Naive thymus-derived CD4-positive, alpha-beta T cell (primary cell): ENCODE measurements at regions of chr10 and their contacts with region 1.

Region 1: GRCh38 chr10:11403116-11403515 is 208.3 kb downstream of the USP6NL start:
- DNase-seq: peak; percentile 25 to 90 (median 84)
- ATAC-seq: peak; percentile 95
- H3K4me3 ChIP-seq: peak overlapping the region; percentile 45
- H3K4me3 Mint-ChIP-seq: peak overlapping the region; percentile 74 to 87 (median 80)
- H3K27ac ChIP-seq: peak overlapping the region; percentile 57
- H3K27ac Mint-ChIP-seq: peak overlapping the region; percentile 89 to 98 (median 93)
- H3K4me1 ChIP-seq: peaks cover 45 to 48% of the 10 kb centered on the region in 2 donors
- H3K4me1 Mint-ChIP-seq: peaks cover 46 to 89% (median 81%) of the 10 kb centered on the region in 7 donors
- H3K27me3 ChIP-seq: no peaks in the 10 kb centered on the region
- H3K27me3 Mint-ChIP-seq: no peaks in the 10 kb centered on the region

Region 2: GRCh38 chr10:11335167-11335652 is 67.9 kb before region 1 on chr10:
- CTCF ChIA-PET with region 1: no interaction called
- POLR2A ChIA-PET with region 1: no interaction called
- intact Hi-C with region 1: loop called in 1 of 2 experiments (anchors 2 kb)
- DNase-seq: no peak
- ATAC-seq: peak; percentile 55
- H3K4me3 ChIP-seq: no peak overlapping the region
- H3K4me3 Mint-ChIP-seq: peak overlapping the region in 3 of 10 donors; percentile 1 to 52 (median 44)
- H3K27ac ChIP-seq: no peak overlapping the region
- H3K27ac Mint-ChIP-seq: peak overlapping the region; percentile 1 to 90 (median 77)
- H3K4me1 ChIP-seq: peaks cover 0 to under 1% of the 10 kb centered on the region in 2 donors
- H3K4me1 Mint-ChIP-seq: peaks cover 7 to 64% (median 51%) of the 10 kb centered on the region in 7 donors
- H3K27me3 ChIP-seq: no peaks in the 10 kb centered on the region
- H3K27me3 Mint-ChIP-seq: no peaks in the 10 kb centered on the region

Region 3: GRCh38 chr10:11367505-11367904 is 35.6 kb before region 1 on chr10:
- CTCF ChIA-PET with region 1: no interaction called
- POLR2A ChIA-PET with region 1: interaction called, 3 read pairs
- intact Hi-C with region 1: loop called in 1 of 2 experiments (anchors 5 kb)
- DNase-seq: no peak
- ATAC-seq: no peak
- H3K4me3 ChIP-seq: no peak overlapping the region
- H3K4me3 Mint-ChIP-seq: peak overlapping the region in 6 of 10 donors; percentile 23 to 88 (median 64)
- H3K27ac ChIP-seq: no peak overlapping the region
- H3K27ac Mint-ChIP-seq: peak overlapping the region in 5 of 9 donors; percentile 46 to 97 (median 91)
- H3K4me1 ChIP-seq: peaks cover 0 to 13% of the 10 kb centered on the region in 2 donors
- H3K4me1 Mint-ChIP-seq: peaks cover 9 to 27% (median 19%) of the 10 kb centered on the region in 7 donors
- H3K27me3 ChIP-seq: no peaks in the 10 kb centered on the region
- H3K27me3 Mint-ChIP-seq: no peaks in the 10 kb centered on the region

Region 4: GRCh38 chr10:11424456-11425297 is 21.6 kb after region 1 on chr10:
- CTCF ChIA-PET with region 1: interaction called, 3 read pairs
- POLR2A ChIA-PET with region 1: no interaction called
- intact Hi-C with region 1: loop called in 1 of 2 experiments (anchors 2 kb)
- DNase-seq: no peak
- ATAC-seq: no peak
- H3K4me3 ChIP-seq: no peak overlapping the region
- H3K4me3 Mint-ChIP-seq: no peak overlapping the region
- H3K27ac ChIP-seq: no peak overlapping the region
- H3K27ac Mint-ChIP-seq: peak overlapping the region in 3 of 9 donors; percentile 3 to 77 (median 16)
- H3K4me1 ChIP-seq: peaks cover 0 to 11% of the 10 kb centered on the region in 2 donors
- H3K4me1 Mint-ChIP-seq: peaks cover 8 to 33% (median 20%) of the 10 kb centered on the region in 7 donors
- H3K27me3 ChIP-seq: no peaks in the 10 kb centered on the region
- H3K27me3 Mint-ChIP-seq: peaks cover 0 to 11% (median 0%) of the 10 kb centered on the region in 5 donors

Region 5: DNA sequence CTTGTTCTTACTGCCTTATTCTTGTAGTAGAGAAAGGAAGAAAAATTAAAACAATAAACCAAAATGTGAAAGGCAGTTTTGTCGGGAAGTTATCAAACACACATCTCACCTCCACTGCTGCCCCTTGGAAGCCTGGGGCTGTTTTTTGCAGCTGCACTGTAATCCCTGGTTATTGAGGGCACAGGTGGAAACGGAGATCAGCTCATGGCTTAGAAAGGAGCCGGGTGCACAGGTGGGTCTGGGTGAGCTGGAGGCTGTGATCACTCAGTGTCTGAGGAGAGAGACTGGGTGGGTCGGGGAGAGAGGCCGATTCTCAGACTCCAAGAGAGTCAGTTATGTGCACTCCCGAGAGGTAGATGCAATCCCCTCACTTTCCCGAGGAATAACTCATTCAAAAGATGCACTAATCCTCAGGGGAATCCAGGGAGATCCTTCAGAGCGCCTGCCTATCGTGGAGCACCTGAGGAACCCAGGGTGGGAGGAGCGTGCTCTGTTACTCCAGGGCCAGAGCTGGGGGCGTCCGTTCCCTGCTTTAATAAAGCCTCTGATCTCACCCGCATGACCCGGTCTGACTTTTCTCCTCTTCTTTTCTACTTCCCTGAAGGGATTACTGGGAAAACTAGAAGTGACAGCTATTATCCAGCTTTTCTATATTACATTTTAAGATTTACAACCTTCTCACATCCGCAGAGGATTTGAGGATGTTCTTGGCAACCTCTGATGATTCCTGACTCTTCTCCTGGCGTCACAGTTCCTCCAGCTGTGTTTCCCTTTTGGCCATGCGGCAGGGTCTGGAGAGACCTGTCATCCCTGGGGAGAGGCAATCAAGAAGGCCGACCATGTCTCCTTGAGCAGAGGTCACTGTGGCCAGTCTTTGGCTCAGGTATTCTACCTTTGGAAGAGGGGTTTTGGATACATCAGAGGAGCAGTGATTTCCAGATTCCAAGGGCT is 1028.3 kb after region 1 on chr10:
- CTCF ChIA-PET with region 1: no interaction called
- POLR2A ChIA-PET with region 1: no interaction called
- intact Hi-C with region 1: no loop called
- DNase-seq: no peak
- ATAC-seq: no peak
- H3K4me3 ChIP-seq: no peak overlapping the region
- H3K4me3 Mint-ChIP-seq: no peak overlapping the region
- H3K27ac ChIP-seq: no peak overlapping the region
- H3K27ac Mint-ChIP-seq: no peak overlapping the region
- H3K4me1 ChIP-seq: no peaks in the 10 kb centered on the region
- H3K4me1 Mint-ChIP-seq: peaks cover 0 to 46% (median 30%) of the 10 kb centered on the region in 7 donors
- H3K27me3 ChIP-seq: no peaks in the 10 kb centered on the region
- H3K27me3 Mint-ChIP-seq: peaks cover 0 to 7% (median 0%) of the 10 kb centered on the region in 5 donors